ENCODE measurements at regions of chr17 and their contacts with region 1.

Region 1: DNA sequence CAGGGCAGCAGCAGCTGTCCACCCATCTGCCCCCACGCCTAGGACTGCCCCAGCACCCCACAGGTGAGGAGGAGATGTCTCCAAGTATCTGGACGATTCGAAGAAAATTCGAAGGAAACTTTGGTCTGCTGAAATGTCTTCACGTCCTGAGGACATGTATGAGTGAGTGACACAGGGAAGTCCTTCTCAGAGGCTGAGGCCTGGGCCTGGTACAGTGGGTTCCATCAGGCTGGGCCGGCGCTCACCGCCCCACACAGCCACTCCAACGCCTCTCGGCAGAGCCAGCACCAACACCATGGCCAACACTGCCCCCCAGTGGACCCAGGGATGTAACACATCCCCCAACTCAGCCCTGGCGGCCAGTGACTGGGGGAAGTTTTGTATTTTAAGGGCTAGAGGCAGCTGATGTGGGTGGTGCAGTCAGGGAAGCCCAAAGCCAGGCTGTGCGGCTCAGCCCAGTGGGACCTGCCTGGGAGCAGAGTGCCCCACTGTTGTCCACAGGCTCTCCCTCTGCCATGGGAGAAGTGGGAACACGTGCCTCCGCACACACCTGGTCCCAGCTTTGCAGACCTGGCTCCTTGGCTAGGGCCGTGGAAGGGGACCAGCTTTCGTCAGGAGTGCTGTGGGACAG is 55.8 kb upstream of the FASN start:
- DNase-seq: peak; percentile 81 to 91
- ATAC-seq: peak; percentile 89 to 97 (median 90)
- H3K4me3 ChIP-seq: no peak overlapping the region
- H3K27ac ChIP-seq: no peak overlapping the region
- H3K4me1 ChIP-seq: peaks cover 12% of the 10 kb centered on the region
- H3K27me3 ChIP-seq: no peaks in the 10 kb centered on the region
- CTCF ChIP-seq: peak; percentile 92

Region 2: GRCh38 chr17:81959362-81960129 is 194.3 kb before region 1 on chr17:
- intact Hi-C with region 1: loop called (anchors 5 kb)
- DNase-seq: peak; percentile 75 to 88
- ATAC-seq: peak; percentile 82 to 87 (median 84)
- H3K4me3 ChIP-seq: peak overlapping the region; percentile 66
- H3K27ac ChIP-seq: no peak overlapping the region
- H3K4me1 ChIP-seq: peaks cover 27% of the 10 kb centered on the region
- H3K27me3 ChIP-seq: peaks cover 0 to 23% (median 3%) of the 10 kb centered on the region in 3 donors
- CTCF ChIP-seq: peak; percentile 90

Region 3: DNA sequence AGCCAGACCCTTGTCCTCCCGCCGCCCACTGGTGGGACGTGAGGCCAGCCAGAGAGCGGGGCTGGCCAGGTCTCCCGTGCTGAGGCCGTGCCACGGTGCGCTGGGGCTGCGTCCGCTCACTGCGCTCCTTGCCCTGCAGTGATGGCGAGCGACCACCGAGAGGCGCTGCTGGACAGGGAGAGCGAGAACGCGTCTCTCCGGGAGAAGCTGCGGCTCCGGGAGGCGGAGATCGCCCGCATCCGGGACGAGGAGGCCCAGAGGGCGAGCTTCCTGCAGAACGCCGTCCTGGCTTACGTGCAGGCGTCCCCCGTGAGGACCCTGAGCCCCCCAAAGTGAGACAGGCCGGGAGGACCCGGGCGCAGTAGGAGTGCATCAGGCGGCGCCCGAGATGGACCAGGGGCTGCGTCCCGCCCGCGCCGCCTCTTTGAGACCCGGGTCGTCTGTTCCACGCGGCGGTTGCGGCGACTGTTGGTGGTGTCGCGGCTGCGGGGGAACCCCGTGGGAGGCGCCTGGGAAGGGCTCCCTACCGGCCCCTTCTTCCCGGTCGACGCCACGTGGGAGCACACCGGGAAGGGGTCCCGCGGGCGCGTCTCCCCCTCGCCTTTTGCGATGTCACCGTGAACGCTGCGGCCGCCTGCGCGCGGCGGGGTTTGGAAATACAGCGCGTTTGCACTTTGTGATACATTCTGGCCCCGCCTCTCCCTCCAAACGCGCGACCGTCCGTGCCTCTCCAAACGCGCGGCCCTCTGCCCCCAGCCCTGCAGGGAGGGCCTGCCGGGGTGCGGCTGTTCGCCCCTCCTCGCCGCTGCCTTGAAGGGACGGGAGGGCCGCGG is 123.2 kb before region 1 on chr17:
- intact Hi-C with region 1: loop called (anchors 1 to 2 kb)
- DNase-seq: peak; percentile 87 to 94
- ATAC-seq: peak; percentile 84 to 96 (median 92)
- H3K4me3 ChIP-seq: peak overlapping the region; percentile 63
- H3K27ac ChIP-seq: no peak overlapping the region
- H3K4me1 ChIP-seq: peaks cover 12% of the 10 kb centered on the region
- H3K27me3 ChIP-seq: peaks cover 0 to 17% (median 0%) of the 10 kb centered on the region in 3 donors
- CTCF ChIP-seq: peak; percentile 98

Region 4: DNA sequence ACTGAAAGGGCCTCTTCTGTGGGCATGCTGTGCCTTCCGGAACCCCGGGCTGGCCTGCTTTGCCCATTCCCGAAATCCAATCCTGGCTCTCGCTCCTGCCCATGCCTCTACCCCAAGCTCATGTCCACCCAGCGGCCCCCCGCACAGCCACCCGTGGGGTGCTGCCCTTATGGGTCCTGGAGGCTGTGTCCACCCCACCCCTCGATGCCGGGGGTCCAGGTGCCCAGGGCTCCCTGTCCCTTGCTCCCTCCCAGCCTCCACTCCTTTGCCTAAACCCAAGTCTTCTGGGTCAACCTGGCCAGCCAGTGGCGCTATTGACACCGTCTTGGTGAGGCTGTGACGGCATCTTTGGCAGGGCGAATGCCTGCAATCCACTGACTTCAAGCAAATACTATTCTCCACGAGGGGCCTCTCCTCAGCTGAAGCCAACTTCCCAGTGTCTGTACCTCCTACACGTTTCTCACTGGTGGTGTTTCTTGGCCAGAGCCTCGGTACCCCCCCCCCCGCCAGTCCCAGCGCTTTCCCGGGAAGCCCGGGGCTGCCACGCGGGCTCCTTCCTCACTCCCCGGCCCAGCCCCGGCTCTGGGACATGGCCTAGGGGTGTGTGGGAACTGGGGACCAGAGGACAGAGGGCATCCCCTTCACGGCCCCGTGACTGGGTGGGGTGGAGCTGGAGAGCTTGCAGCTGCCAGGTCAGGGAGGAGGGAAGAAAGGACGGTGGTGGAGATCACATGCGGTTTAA is 76.1 kb before region 1 on chr17:
- intact Hi-C with region 1: no loop called
- DNase-seq: peak; percentile 55 to 57
- ATAC-seq: peak in 2 of 4 donors; percentile 6 to 20
- H3K4me3 ChIP-seq: no peak overlapping the region
- H3K27ac ChIP-seq: no peak overlapping the region
- H3K4me1 ChIP-seq: no peaks in the 10 kb centered on the region
- H3K27me3 ChIP-seq: no peaks in the 10 kb centered on the region
- CTCF ChIP-seq: no peak

Region 5: DNA sequence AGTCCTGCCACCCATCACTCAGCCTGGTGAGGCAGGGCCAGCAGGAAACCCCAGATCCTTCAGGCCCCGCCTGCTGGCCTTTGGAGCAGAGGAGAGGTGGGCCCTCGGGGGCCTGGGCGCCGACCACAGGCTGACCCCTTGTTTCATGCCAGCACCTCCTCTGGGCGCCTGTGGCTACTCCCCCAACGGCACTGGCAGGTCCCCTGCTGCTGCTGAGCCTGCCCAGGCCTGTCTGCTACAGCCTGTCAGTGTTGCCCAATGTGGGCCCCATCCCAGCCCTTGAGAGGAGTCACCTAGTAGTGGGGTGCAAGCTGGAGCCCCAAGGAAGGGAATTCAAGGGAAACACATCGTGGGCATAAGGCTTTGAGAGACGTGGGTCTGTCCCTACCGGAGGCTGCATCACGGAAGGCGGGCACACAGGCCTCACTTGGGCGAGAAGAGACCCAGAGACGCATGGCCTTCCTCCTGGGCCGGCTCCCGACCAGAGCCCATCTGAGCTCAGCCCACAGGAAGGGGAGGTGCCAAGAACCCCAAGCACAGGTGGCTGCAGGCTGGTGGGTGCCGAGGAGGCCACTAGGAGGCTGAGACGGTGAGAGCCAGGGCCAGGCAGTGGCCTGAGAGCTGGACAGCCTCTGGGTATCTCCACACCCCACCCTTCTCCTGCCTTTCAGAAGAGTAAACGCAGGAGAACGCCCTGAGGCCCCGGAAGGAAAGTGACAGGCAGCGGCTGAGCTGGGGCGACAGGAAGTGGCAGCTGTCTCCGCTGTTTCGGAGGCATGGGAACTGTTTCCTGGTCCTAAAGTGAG is 47.8 kb before region 1 on chr17:
- intact Hi-C with region 1: loop called in 1 of 2 experiments (anchors 5 kb)
- DNase-seq: peak; percentile 47 to 74
- ATAC-seq: peak; percentile 18 to 53 (median 40)
- H3K4me3 ChIP-seq: peak overlapping the region; percentile 43
- H3K27ac ChIP-seq: peak overlapping the region; percentile 97
- H3K4me1 ChIP-seq: peaks cover 45% of the 10 kb centered on the region
- H3K27me3 ChIP-seq: no peaks in the 10 kb centered on the region
- CTCF ChIP-seq: peak; percentile 15

Measured in psoas muscle (tissue), 8 donors.